Activated CD4-positive, alpha-beta T cell treated with anti-CD3 and anti-CD28 coated beads for 36 hours (primary cell): ENCODE measurements at regions of chr11 and their contacts with region 1.

Region 1: DNA sequence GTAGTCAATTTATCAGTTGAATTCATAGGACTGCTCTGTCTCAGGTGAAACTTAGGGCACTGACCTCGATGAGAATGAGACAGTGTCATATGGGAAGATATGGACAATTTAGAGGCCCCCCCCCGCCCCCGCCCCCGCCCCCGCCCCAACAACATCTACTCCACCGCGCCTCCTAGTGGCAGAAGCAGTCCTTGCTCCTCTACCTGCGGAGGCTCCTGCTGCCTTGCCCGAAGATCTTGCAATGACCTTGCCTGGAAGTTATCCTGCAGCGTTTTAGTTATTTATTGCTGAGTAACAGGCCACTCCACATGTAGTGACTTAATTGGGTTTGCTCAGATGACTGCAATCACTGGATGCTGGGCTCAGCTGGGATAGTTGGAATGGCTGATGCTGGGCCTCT is 15.2 kb downstream of the SERPINH1 start:
- DNase-seq: peak; percentile 78
- ATAC-seq: peak; percentile 34
- H3K4me3 Mint-ChIP-seq: no peak overlapping the region
- H3K27ac Mint-ChIP-seq: no peak overlapping the region
- H3K4me1 Mint-ChIP-seq: peaks cover 4% of the 10 kb centered on the region
- H3K27me3 Mint-ChIP-seq: no peaks in the 10 kb centered on the region

Region 2: DNA sequence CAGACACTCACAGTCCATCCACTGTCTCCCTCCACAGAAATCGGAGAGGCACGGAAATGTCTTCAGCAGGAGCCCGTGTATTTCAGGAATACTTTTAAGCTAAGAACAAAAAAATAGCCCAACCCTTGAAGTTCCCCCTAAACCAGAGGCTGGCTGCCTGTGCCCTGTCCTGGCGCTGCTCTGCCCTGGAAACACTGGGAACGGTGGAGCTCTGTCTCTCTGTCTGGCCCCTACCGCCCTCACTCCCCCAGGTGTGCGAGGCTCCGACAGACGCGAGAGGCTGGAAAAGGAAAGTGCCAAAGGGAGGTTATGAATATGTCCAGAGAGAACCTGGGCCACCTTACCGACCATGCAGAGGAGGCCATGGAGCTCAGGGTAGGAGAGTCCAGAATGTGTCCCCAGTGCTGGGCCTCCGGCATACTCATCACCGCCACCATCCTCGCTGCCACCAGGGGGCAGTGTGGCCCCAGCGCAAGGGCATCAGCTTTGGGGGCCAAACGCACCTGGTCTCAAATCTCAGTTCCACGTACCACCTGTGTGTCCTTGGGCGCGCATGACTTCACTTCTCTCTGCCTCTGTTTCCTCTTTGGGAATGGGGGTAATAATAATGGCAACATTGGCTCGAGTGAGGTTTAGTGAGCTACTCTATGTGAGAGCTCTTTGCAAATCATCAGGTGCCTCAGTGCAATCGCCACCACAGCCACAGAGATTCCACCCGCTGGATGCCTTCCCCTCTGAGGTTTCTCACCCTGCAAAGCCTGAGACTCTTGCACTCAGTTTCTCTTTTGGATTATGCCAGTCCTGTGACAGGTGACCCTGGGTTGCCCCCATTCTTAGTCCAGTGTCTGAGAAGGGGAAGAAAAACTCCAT is 436.7 kb before region 1 on chr11:
- CTCF ChIA-PET with region 1: no interaction called
- POLR2A ChIA-PET with region 1: no interaction called
- intact Hi-C with region 1: no loop called
- DNase-seq: peak; percentile 88
- ATAC-seq: peak; percentile 32
- H3K4me3 Mint-ChIP-seq: no peak overlapping the region
- H3K27ac Mint-ChIP-seq: no peak overlapping the region
- H3K4me1 Mint-ChIP-seq: peaks cover 30% of the 10 kb centered on the region
- H3K27me3 Mint-ChIP-seq: peaks cover 2% of the 10 kb centered on the region

Region 3: GRCh38 chr11:75547580-75548058 is 29.6 kb before region 1 on chr11:
- CTCF ChIA-PET with region 1: interaction called, 4 read pairs
- POLR2A ChIA-PET with region 1: no interaction called
- intact Hi-C with region 1: loop called in 1 of 2 experiments (anchors 2 kb)
- DNase-seq: peak; percentile 62
- ATAC-seq: peak; percentile 59
- H3K4me3 Mint-ChIP-seq: no peak overlapping the region
- H3K27ac Mint-ChIP-seq: no peak overlapping the region
- H3K4me1 Mint-ChIP-seq: peaks cover 2% of the 10 kb centered on the region
- H3K27me3 Mint-ChIP-seq: peaks cover 2% of the 10 kb centered on the region